Activated CD4-positive, alpha-beta memory T cell treated with anti-CD3 and anti-CD28 coated beads for 36 hours (primary cell): ENCODE measurements at regions of chr3 and their contacts with region 1.

Region 1: DNA sequence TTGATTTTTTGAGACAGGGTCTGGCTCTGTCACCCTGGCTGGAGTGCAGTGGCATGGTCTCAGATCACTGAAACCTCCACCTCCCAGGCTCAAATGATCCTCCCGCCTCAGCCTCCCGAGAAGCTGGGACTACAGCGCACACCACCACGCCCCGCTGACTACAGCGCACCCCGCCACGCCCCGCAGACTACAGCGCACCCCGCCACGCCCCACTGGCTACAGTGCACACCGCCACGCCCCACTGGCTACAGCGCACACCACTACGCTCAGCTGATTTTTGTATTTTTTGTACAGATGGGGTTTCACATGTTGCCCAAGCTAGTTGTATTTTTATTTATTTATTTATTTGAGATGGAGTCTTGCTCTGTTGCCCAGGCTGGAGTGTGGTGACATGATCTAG is 35.6 kb downstream of the SLC51A start:
- DNase-seq: no peak
- H3K4me3 Mint-ChIP-seq: no peak overlapping the region
- H3K27ac Mint-ChIP-seq: no peak overlapping the region
- H3K4me1 Mint-ChIP-seq: peaks cover 6% of the 10 kb centered on the region
- H3K27me3 Mint-ChIP-seq: no peaks in the 10 kb centered on the region

Region 2: DNA sequence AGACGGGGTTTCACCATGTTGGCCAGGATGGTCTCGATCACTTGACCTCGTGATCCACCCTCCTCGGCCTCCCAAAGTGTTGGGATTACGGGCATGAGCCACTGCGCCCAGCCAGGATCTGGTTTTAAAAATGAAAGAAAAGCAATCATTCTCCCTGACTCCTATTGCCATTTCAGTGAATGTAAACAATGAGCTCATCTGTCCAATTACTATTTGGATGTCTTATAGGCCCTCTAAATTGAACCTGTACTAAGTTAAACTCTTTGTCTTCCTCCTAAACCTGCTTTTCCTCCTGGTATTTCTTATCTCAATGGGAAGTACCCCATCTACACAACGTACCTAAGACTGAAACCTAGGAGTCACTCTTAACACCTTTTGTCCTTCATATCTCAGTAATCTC is 11.9 kb after region 1 on chr3:
- CTCF ChIA-PET with region 1: interaction called, 10 read pairs
- POLR2A ChIA-PET with region 1: no interaction called
- intact Hi-C with region 1: no loop called
- DNase-seq: no peak
- H3K4me3 Mint-ChIP-seq: no peak overlapping the region
- H3K27ac Mint-ChIP-seq: no peak overlapping the region
- H3K4me1 Mint-ChIP-seq: peaks cover 4% of the 10 kb centered on the region
- H3K27me3 Mint-ChIP-seq: no peaks in the 10 kb centered on the region

Region 3: DNA sequence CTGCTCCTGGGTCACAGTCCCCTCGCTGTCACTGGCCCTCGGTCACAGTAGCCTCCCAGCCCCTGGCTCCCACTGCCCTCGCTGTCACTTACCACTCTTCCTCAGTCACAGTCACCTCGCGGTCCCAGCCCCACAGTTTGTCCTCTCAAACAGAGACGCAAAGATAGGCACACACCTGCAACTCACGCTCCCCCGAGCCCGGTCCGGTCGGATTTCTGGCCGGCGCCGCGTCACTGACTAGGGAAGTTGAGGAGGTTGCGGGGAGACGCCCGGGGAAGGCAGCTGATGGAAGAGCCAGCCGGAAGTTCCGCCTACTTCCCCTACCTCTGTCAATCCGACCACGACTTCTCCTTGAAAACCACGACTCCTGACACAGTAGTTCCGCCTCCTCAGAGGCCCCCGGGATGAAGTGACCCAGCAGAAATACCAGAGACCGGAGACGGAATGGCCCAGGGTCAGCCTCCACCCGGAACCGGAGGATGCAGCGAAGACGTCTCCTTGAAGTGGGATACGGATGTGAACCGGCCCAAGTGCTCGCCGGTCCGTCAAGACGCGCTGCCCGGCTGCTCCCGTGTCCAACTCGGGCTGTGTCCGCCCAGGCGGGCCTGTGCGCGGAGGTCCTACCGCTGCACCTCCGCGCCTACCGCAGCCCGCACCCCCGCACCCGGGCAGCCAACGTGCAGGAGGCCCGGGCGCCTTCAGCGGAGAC is 35.7 kb after region 1 on chr3 and contains the start of gene PCYT1A:
- CTCF ChIA-PET with region 1: no interaction called
- POLR2A ChIA-PET with region 1: no interaction called
- intact Hi-C with region 1: loop called (anchors 1 kb)
- DNase-seq: peak; percentile 87
- H3K4me3 Mint-ChIP-seq: peak within 1 kb of the TSS; percentile 100
- H3K27ac Mint-ChIP-seq: peak within 1 kb of the TSS; percentile 98
- H3K4me1 Mint-ChIP-seq: peaks cover 39% of the 10 kb centered on the region
- H3K27me3 Mint-ChIP-seq: no peaks in the 10 kb centered on the region
- total RNA-seq, gene PCYT1A: 46.8 to 48.6 TPM

Region 4: GRCh38 chr3:196298521-196298920 is 46.6 kb after region 1 on chr3:
- CTCF ChIA-PET with region 1: no interaction called
- POLR2A ChIA-PET with region 1: no interaction called
- intact Hi-C with region 1: no loop called
- DNase-seq: no peak
- H3K4me3 Mint-ChIP-seq: no peak overlapping the region
- H3K27ac Mint-ChIP-seq: no peak overlapping the region
- H3K4me1 Mint-ChIP-seq: peaks cover 6% of the 10 kb centered on the region
- H3K27me3 Mint-ChIP-seq: no peaks in the 10 kb centered on the region

Region 5: GRCh38 chr3:196317687-196318467 is 66.0 kb after region 1 on chr3 and contains the start of gene DYNLT2B:
- CTCF ChIA-PET with region 1: interaction called, 4 read pairs
- POLR2A ChIA-PET with region 1: interaction called, 4 read pairs
- intact Hi-C with region 1: loop called (anchors 1 kb)
- DNase-seq: peak; percentile 92
- H3K4me3 Mint-ChIP-seq: peak within 1 kb of the TSS; percentile 97
- H3K27ac Mint-ChIP-seq: peak within 1 kb of the TSS; percentile 95
- H3K4me1 Mint-ChIP-seq: peaks cover 7% of the 10 kb centered on the region
- H3K27me3 Mint-ChIP-seq: no peaks in the 10 kb centered on the region
- total RNA-seq, gene DYNLT2B: 15.8 to 17.1 TPM

Region 6: GRCh38 chr3:196518966-196519717 is 267.2 kb after region 1 on chr3:
- CTCF ChIA-PET with region 1: interaction called, 32 read pairs
- POLR2A ChIA-PET with region 1: no interaction called
- intact Hi-C with region 1: loop called (anchors 1 kb)
- DNase-seq: peak; percentile 78
- H3K4me3 Mint-ChIP-seq: no peak overlapping the region
- H3K27ac Mint-ChIP-seq: no peak overlapping the region
- H3K4me1 Mint-ChIP-seq: no peaks in the 10 kb centered on the region
- H3K27me3 Mint-ChIP-seq: no peaks in the 10 kb centered on the region